HepG2 (cell line): ENCODE measurements at regions of chr3 and their contacts with region 1.

Region 1: DNA sequence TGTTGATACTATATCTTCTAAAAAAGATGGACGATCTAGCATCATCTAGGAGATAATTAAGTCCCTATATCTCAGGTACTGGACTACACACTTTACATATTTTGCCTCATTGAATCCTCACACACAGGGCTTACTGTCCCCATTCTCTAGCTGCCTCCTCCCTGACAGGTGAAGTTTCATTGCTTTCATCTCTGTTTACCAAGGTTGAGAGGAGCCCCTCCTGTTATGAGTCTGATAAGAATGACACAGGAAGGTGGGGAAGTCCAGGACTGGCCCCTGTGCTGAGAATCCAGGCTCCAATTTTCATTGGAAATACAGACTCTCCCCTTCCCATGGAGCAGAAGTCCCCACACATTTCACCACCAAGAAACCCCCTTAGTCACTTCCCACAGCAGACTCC is 105.2 kb downstream of the XXYLT1 start:
- DNase-seq: peak; percentile 97
- ATAC-seq: peak; percentile 53
- H3K4me3 ChIP-seq: peak overlapping the region in 1 of 3 experiments; percentile 51; a peak in 1 of 6 replicates
- H3K27ac ChIP-seq: peak overlapping the region; percentile 100
- H3K4me1 ChIP-seq: peaks cover 86% of the 10 kb centered on the region
- H3K27me3 ChIP-seq: no peaks in the 10 kb centered on the region
- CTCF ChIP-seq: 0 out of 2 replicates have a peak, but pooled peaks have one; percentile 17
- EP300 ChIP-seq: peak in 1 of 2 experiments; percentile 97; a peak in 2 of 4 replicates
- POLR2A ChIP-seq: peak; percentile 10 to 41; a peak in 1 of 4 replicates
- RAD21 ChIP-seq: no peak

Region 2: GRCh38 chr3:195102609-195103467 is 63.0 kb before region 1 on chr3:
- CTCF ChIA-PET with region 1: no interaction called
- POLR2A ChIA-PET with region 1: no interaction called
- in situ Hi-C with region 1: no loop called
- intact Hi-C with region 1: no loop called
- DNase-seq: no peak
- ATAC-seq: no peak
- H3K4me3 ChIP-seq: no peak overlapping the region
- H3K27ac ChIP-seq: no peak overlapping the region
- H3K4me1 ChIP-seq: peaks cover 38% of the 10 kb centered on the region
- H3K27me3 ChIP-seq: no peaks in the 10 kb centered on the region
- CTCF ChIP-seq: no peak
- EP300 ChIP-seq: no peak
- POLR2A ChIP-seq: no peak
- RAD21 ChIP-seq: no peak

Region 3: DNA sequence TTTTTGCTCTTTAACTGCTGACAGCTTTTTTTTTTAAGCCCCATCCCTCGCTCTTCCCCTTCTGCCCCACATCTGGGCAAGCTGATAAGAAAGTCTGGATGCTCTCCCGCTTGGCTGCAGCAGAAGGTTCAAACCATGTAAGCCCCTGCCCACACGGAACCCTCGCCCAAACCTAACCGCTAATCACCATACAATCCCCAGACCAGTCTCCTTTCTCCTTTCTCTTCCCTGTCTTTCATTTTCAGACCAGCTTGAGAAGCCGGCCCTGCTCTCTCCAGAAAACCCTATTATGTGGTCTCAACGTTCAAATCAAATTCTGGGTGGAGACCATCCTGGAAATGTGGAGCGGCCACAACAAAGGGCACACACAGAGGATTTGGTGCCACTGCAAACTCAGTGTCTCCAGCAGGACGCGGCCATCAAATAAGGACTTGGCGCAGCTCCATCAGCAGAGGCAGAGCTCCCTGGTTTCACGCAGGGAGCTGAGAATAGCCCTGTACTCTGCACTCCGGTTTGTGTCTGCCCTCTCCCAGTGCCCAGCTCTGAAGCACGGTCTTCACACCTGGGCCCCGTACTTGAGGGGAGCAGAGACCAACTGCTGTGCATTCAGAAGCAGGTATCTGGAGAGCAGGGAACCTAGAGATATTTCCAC is 12.5 kb after region 1 on chr3:
- CTCF ChIA-PET with region 1: no interaction called
- POLR2A ChIA-PET with region 1: interaction called, 4 read pairs
- in situ Hi-C with region 1: no loop called
- intact Hi-C with region 1: loop called (anchors 1 kb)
- DNase-seq: no peak
- ATAC-seq: peak; percentile 24; the same call in 1 of the 3 replicates
- H3K4me3 ChIP-seq: no peak overlapping the region
- H3K27ac ChIP-seq: no peak overlapping the region
- H3K4me1 ChIP-seq: peaks cover 43% of the 10 kb centered on the region
- H3K27me3 ChIP-seq: no peaks in the 10 kb centered on the region
- CTCF ChIP-seq: no peak
- EP300 ChIP-seq: no peak
- POLR2A ChIP-seq: no peak
- RAD21 ChIP-seq: no peak